ENCODE measurements at regions of chr4 and their contacts with region 1.

Region 1: GRCh38 chr4:153573881-153574802 is 108.0 kb downstream of the TMEM131L start:
- DNase-seq: peak; percentile 73
- H3K4me3 Mint-ChIP-seq: no peak overlapping the region
- H3K27ac Mint-ChIP-seq: peak overlapping the region; percentile 30
- H3K4me1 Mint-ChIP-seq: peaks cover 55% of the 10 kb centered on the region
- H3K27me3 Mint-ChIP-seq: no peaks in the 10 kb centered on the region

Region 2: GRCh38 chr4:153153339-153153871 is 420.7 kb before region 1 on chr4:
- CTCF ChIA-PET with region 1: no interaction called
- POLR2A ChIA-PET with region 1: no interaction called
- intact Hi-C with region 1: loop called (anchors 5 kb)
- DNase-seq: peak; percentile 89
- H3K4me3 Mint-ChIP-seq: peak overlapping the region; percentile 78
- H3K27ac Mint-ChIP-seq: peak overlapping the region; percentile 83
- H3K4me1 Mint-ChIP-seq: peaks cover 53% of the 10 kb centered on the region
- H3K27me3 Mint-ChIP-seq: peaks cover 2% of the 10 kb centered on the region

Region 3: GRCh38 chr4:153432968-153433753 is 141.0 kb before region 1 on chr4:
- CTCF ChIA-PET with region 1: interaction called, 33 read pairs
- POLR2A ChIA-PET with region 1: no interaction called
- intact Hi-C with region 1: loop called (anchors 1 kb)
- DNase-seq: peak; percentile 88
- H3K4me3 Mint-ChIP-seq: peak overlapping the region; percentile 77
- H3K27ac Mint-ChIP-seq: peak overlapping the region; percentile 74
- H3K4me1 Mint-ChIP-seq: peaks cover 52% of the 10 kb centered on the region
- H3K27me3 Mint-ChIP-seq: no peaks in the 10 kb centered on the region

Region 4: GRCh38 chr4:153488006-153488891 is 85.9 kb before region 1 on chr4:
- CTCF ChIA-PET with region 1: interaction called, 12 read pairs
- POLR2A ChIA-PET with region 1: no interaction called
- intact Hi-C with region 1: loop called (anchors 1 kb)
- DNase-seq: peak; percentile 88
- H3K4me3 Mint-ChIP-seq: peak overlapping the region; percentile 56
- H3K27ac Mint-ChIP-seq: peak overlapping the region; percentile 87
- H3K4me1 Mint-ChIP-seq: peaks cover 73% of the 10 kb centered on the region
- H3K27me3 Mint-ChIP-seq: no peaks in the 10 kb centered on the region

Region 5: DNA sequence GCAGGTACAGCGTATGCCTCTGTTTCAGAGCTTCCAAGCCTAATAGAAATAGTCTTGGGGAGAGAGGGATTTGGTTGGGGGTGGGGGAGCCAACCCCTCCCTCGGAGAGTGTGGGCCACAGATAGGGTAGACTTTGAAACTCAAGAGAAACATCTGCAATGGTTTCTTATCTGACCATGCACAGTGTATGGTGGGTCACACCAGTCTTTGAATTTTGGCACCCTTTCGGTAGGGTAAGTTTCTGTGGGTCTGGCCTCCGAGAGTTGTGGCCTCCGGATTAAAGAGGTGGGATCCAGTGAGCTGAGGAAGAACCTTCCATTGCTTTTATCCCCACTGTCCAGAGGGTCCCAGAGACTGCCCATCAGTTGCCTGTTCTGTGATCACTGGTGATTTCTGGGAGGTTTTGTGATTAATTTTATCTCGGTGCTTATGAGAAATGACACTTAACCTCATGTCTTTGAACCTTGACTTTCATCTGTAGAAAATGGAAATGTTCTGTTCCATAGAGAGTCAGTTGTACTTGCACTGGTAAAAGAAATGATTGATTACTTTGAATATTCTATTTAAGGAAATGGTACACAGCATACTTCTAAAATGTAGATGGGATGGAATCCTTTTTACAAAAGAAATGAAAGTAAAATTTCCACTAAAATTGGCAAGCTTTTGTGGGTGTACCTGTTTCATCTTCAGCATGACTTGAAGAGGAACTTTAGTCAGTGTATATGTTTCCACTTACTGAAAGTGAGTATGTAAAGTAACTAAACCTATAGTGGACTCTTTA is 45.2 kb before region 1 on chr4:
- CTCF ChIA-PET with region 1: interaction called, 21 read pairs
- POLR2A ChIA-PET with region 1: no interaction called
- intact Hi-C with region 1: loop called (anchors 10 kb)
- DNase-seq: peak; percentile 30
- H3K4me3 Mint-ChIP-seq: peak overlapping the region; percentile 66
- H3K27ac Mint-ChIP-seq: peak overlapping the region; percentile 93
- H3K4me1 Mint-ChIP-seq: peaks cover 86% of the 10 kb centered on the region
- H3K27me3 Mint-ChIP-seq: no peaks in the 10 kb centered on the region

Region 6: GRCh38 chr4:153585026-153585425 is 10.9 kb after region 1 on chr4:
- CTCF ChIA-PET with region 1: interaction called, 14 read pairs
- POLR2A ChIA-PET with region 1: no interaction called
- intact Hi-C with region 1: no loop called
- DNase-seq: no peak
- H3K4me3 Mint-ChIP-seq: no peak overlapping the region
- H3K27ac Mint-ChIP-seq: peak overlapping the region; percentile 44
- H3K4me1 Mint-ChIP-seq: peaks cover 19% of the 10 kb centered on the region
- H3K27me3 Mint-ChIP-seq: no peaks in the 10 kb centered on the region

Measured in activated CD4-positive, alpha-beta memory T cell treated with anti-CD3 and anti-CD28 coated beads for 36 hours (primary cell).